ENCODE measurements at regions of chr19 and their contacts with region 1.

Region 1: DNA sequence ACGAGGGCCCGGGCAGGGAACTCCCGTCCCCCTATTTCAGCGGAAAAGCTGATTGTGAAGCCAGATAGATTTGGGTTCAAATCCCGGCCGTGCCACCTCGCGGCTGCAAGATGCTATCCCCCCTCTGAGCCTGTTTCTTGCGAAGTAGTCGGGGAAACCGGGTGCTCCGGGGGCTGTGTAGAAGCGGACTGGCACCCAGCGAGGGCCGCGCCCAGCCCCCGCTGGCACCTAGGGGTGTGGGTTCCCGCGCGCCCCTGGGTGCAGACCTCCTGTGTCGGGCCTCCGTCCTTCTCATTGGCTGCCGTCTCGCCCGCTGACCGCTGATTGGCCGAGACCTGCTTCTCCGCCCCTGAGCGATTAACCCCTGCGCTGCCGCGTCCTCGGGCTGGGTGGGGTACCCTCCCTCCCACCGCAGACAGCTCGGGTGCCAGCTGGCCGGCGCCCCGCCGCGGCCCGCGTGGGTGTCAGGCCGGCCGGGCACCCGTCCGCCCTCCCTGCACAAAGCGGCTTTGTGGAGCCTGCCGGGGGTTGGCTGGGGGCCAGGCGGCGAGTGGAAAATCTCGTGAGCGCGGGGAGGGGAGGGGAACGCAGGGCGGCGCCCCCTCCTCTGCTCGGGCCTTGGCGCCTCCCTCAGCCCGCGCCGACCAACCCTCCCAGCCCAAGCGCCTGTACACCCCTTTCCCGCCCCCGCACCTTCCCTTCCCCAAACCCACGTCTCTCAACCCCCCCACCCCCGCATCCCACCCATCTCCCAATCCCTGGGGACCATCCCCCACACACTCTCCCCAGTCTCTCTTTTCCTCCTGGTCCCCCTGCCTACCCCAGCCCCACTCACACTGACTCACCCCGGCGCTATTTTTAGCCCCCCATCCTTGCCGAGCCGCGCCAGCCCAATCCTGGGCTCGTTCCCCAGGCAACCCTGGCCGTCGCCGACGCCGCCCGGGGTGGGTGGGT is 11.4 kb downstream of the CIC start:
- DNase-seq: peak; percentile 92
- H3K4me3 Mint-ChIP-seq: peak overlapping the region; percentile 86
- H3K27ac Mint-ChIP-seq: peak overlapping the region; percentile 86
- H3K4me1 Mint-ChIP-seq: peaks cover 58% of the 10 kb centered on the region
- H3K27me3 Mint-ChIP-seq: no peaks in the 10 kb centered on the region

Region 2: DNA sequence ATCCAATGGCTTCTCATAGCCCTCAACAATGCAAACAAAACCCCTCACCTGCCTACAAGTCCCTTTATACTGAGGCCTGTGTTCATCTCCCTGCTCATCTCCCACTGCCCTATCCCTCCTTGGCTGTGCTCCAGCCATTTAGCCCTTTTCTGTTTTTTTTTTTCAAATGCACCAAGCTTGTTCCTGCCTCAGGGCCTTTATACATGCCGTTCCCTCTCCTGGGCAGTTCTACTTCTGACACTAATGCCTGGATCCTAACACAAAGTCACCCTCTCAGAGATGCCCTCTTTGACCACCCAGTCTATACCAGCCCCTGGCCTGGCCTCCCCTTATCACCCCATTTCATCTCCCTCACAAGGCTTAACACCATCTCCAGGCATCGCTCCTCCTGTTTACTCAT is 177.6 kb before region 1 on chr19:
- CTCF ChIA-PET with region 1: no interaction called
- POLR2A ChIA-PET with region 1: interaction called, 12 read pairs
- DNase-seq: no peak
- H3K4me3 Mint-ChIP-seq: no peak overlapping the region
- H3K27ac Mint-ChIP-seq: no peak overlapping the region
- H3K4me1 Mint-ChIP-seq: peaks cover 11% of the 10 kb centered on the region
- H3K27me3 Mint-ChIP-seq: no peaks in the 10 kb centered on the region

Region 3: DNA sequence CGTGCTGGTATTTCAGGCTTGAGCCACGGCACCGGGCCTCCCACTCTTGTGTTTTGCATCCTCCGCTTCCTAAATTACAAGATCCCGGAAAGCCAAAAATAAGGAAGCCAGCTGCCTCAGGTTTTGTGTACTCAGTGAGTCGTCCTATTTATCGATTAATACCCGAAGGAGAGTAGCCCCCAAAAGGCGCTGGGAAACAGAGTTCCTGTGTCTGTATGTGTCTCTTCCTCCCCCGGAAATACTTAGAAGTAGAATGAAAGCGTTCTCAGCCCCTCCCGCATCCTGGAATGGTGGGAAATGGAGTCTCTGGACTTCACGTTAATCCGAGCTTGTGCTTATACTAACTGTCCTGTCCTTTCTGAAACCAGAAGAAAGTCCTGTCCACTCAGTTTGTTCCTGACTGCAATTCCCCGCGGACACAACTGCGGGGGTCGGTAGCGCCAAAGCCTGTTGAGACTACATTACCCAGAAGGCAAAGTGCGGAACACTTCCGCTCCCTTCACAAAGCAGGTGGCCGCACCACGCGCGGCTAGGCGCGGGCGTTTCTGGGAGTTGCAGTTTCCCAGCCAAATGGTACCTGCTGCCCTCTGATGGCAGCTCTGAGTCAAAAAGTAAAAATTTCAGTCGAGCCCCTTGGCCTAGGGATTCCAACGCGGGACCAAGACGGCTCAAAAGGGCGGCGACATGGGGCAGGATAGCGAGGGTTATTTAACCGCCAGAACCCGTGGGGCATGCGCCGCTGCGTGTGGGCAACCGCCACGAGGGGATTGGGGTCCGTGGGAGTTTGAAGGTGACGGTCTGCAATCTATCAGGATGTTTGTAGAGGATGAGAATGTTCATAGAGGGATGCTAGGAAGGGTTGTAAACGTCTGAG is 35.9 kb before region 1 on chr19:
- CTCF ChIA-PET with region 1: interaction called, 36 read pairs
- POLR2A ChIA-PET with region 1: interaction called, 4 read pairs
- DNase-seq: peak; percentile 96
- H3K4me3 Mint-ChIP-seq: peak overlapping the region; percentile 92
- H3K27ac Mint-ChIP-seq: peak overlapping the region; percentile 98
- H3K4me1 Mint-ChIP-seq: peaks cover 45% of the 10 kb centered on the region
- H3K27me3 Mint-ChIP-seq: no peaks in the 10 kb centered on the region

Region 4: GRCh38 chr19:42250666-42251531 is 29.6 kb before region 1 on chr19:
- CTCF ChIA-PET with region 1: interaction called, 14 read pairs
- POLR2A ChIA-PET with region 1: no interaction called
- DNase-seq: no peak
- H3K4me3 Mint-ChIP-seq: peak overlapping the region; percentile 22
- H3K27ac Mint-ChIP-seq: peak overlapping the region; percentile 81
- H3K4me1 Mint-ChIP-seq: peaks cover 38% of the 10 kb centered on the region
- H3K27me3 Mint-ChIP-seq: peaks cover 2% of the 10 kb centered on the region

Region 5: DNA sequence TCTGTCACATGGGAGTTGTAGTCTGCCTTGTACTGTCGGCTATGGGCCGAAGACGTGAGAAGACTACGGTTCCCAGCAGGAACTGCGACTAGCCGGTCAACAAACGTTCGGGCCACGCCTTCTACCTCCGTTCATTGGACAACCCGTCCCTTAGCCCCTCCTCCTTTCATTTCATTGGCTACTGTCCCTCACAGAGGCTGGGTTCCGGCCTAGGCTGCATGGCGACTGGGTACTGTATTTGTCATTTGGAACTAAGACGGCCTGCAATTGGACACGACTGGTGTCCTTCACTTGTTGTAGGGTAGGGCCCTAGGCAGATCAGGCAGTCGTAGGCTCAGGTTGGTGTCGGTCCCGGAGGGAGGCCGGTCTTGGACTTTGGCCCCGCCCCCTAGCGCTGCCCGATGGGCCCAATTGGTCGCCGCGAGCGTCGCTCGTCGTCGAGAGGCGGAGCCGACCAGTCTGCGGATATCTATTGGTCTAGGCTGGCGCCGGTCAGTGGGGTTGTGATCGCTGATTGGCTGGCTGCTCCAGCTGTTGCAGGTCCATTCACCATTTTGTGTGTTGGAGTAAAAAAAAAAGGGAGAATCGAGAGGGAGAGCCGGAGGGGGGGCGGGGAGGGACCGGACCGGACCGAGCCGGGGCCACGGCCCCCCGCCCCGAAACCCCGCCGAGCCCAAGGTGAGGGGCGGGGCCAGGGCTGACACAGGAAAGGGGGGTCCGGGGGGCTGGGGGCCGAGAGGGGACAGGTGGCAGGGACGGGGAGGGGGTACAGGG is 11.6 kb before region 1 on chr19 and contains the start of gene CIC:
- CTCF ChIA-PET with region 1: interaction called, 31 read pairs
- POLR2A ChIA-PET with region 1: interaction called, 3 read pairs
- DNase-seq: peak; percentile 100
- H3K4me3 Mint-ChIP-seq: no peak within 1 kb of the TSS
- H3K27ac Mint-ChIP-seq: peak within 1 kb of the TSS; percentile 99
- H3K4me1 Mint-ChIP-seq: peaks cover 30% of the 10 kb centered on the region
- H3K27me3 Mint-ChIP-seq: no peaks in the 10 kb centered on the region
- total RNA-seq, gene CIC: 69.3 to 81.0 TPM

Region 6: GRCh38 chr19:42295831-42296525 is 15.5 kb after region 1 on chr19:
- CTCF ChIA-PET with region 1: interaction called, 10 read pairs
- POLR2A ChIA-PET with region 1: no interaction called
- DNase-seq: peak; percentile 91
- H3K4me3 Mint-ChIP-seq: no peak overlapping the region
- H3K27ac Mint-ChIP-seq: no peak overlapping the region
- H3K4me1 Mint-ChIP-seq: peaks cover 20% of the 10 kb centered on the region
- H3K27me3 Mint-ChIP-seq: no peaks in the 10 kb centered on the region